Activated CD8-positive, alpha-beta T cell treated with anti-CD3 and anti-CD28 coated beads, Interleukin-2, amount 10 ng/mL, durations not matched to agents 7 days and 5 days (primary cell): ENCODE measurements at regions of chr16 and their contacts with region 1.

Region 1: GRCh38 chr16:667780-668518 is at the start of gene RHOT2:
- DNase-seq: peak; percentile 94
- ATAC-seq: peak; percentile 93
- H3K4me3 Mint-ChIP-seq: peak within 1 kb of the TSS; percentile 79
- H3K27ac Mint-ChIP-seq: peak within 1 kb of the TSS; percentile 88
- H3K4me1 Mint-ChIP-seq: peaks cover 12% of the 10 kb centered on the region
- H3K27me3 Mint-ChIP-seq: no peaks in the 10 kb centered on the region
- total RNA-seq, gene RHOT2: 135 to 139 TPM

Region 2: DNA sequence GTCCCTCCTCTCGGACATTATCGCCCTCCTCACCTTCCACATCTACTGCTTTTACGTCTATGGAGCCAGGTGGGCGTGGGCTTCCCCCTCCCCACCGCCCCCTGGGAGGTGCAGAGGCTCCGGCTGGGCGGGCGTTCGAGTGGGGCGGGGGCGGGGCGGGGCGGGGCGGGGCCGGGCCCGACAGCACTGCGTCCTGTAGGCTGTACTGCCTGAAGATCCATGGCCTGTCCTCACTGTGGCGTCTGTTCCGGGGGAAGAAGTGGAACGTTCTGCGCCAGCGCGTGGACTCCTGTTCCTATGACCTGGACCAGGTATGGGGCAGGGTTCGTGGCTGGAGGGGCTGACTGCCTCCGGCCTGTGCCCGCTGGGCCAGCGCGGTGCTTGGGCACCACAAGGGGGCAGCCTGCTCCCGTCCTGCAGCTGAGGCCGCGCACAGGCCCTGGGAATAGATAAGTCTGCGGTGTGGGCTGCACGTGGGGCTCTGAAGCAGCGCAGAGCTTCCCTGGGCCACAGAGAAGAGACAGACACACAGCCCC is 89.0 kb before region 1 on chr16:
- CTCF ChIA-PET with region 1: no interaction called
- POLR2A ChIA-PET with region 1: no interaction called
- DNase-seq: peak; percentile 74
- ATAC-seq: peak; percentile 90
- H3K4me3 Mint-ChIP-seq: no peak overlapping the region
- H3K27ac Mint-ChIP-seq: no peak overlapping the region
- H3K4me1 Mint-ChIP-seq: peaks cover 5% of the 10 kb centered on the region
- H3K27me3 Mint-ChIP-seq: no peaks in the 10 kb centered on the region

Region 3: DNA sequence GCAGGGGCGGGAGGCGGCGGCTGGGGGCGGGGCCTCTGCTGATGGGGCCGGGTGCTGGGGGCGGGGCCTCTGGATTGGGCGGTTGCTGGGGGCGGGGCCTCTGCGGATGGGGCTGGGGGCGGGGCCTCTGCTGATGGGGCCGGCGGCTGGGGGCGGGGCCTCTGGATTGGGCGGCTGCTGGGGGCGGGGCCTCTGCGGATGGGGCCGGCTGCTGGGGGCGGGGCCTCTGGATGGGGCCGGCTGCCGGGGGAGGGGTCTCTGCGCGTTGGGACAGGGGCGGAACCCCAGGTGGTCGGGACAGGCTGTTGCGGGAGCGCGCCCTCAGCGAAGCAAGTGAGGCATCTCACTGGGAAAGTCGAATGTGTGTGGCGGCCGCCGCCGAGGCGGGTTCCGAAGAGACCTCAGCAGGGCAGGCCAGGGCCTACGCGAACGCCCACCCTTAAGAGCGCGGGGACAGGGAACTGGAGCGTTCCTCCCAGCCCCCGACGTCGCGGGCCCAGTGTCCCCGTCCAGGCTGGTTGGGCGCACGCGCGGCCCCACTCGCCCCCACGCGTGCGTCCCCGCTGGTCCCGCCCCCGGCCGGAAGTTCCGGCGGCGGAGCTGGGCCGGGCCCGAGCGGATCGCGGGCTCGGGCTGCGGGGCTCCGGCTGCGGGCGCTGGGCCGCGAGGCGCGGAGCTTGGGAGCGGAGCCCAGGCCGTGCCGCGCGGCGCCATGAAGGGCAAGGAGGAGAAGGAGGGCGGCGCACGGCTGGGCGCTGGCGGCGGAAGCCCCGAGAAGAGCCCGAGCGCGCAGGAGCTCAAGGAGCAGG is 12.1 kb after region 1 on chr16 and contains the start of gene STUB1:
- CTCF ChIA-PET with region 1: interaction called, 10 read pairs
- POLR2A ChIA-PET with region 1: interaction called, 9 read pairs
- DNase-seq: peak; percentile 90
- ATAC-seq: peak; percentile 41
- H3K4me3 Mint-ChIP-seq: peak within 1 kb of the TSS; percentile 81
- H3K27ac Mint-ChIP-seq: peak within 1 kb of the TSS; percentile 90
- H3K4me1 Mint-ChIP-seq: peaks cover 42% of the 10 kb centered on the region
- H3K27me3 Mint-ChIP-seq: peaks cover 4% of the 10 kb centered on the region
- total RNA-seq, gene STUB1: 80.4 to 86.4 TPM

Region 4: DNA sequence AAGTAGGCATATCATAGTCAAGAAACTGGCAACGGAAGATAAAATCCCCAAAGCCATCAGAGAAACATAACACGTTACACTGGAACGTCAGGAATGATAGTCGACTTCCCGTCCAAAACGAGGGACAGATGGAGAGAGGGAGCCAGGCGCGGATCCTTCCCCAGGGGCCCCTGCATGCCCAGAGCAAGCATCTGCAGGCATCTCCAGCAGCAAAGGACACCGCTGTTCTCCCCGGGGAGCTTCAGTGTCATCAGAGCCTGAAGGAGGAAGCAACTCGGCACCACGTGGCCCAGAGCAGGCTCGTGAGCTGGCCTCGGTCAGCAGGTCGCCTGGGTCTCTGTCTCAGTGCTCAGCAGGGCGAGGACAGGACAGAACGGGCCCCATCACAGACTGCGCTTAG is 252.8 kb after region 1 on chr16:
- CTCF ChIA-PET with region 1: no interaction called
- POLR2A ChIA-PET with region 1: no interaction called
- DNase-seq: no peak
- ATAC-seq: no peak
- H3K4me3 Mint-ChIP-seq: no peak overlapping the region
- H3K27ac Mint-ChIP-seq: no peak overlapping the region
- H3K4me1 Mint-ChIP-seq: no peaks in the 10 kb centered on the region
- H3K27me3 Mint-ChIP-seq: no peaks in the 10 kb centered on the region